GM12878 (cell line): ENCODE measurements at regions of chr3 and their contacts with region 1.

Region 1: DNA sequence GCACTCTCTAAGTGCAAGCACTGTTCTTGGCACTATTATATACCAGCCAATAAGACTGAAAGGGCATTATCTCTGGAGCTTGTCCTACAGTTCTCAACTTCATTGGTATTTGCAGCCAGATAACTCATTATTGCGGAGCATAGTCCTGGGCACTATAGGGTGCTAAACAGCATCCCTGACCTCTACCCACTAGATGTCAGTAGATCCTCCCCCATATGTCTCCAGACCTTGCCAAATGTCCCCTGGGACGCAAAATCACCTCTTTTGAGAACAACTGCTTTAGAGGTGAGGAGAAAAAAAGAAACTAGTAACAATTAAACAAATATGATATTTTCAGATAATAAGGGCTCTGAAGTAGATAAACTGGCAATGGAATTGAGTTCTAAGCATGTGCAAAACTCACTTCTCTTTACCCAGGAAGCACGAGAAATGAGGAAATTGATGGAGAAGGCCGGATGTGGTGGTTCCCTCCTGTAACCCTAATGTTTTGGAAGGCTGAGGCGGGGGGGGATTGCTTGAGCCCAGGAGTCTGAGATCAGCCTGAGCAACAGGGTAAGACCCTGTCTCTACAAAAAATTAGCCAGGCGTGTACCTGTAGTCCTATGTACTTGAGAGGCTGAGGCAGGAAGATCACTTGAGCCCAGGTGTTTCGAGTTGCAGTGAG is 61.4 kb downstream of the FRMD4B start:
- DNase-seq: no peak
- ATAC-seq: peak; percentile 70
- H3K4me3 ChIP-seq: no peak overlapping the region
- H3K27ac ChIP-seq: no peak overlapping the region
- H3K4me1 ChIP-seq: peaks cover 28% of the 10 kb centered on the region
- H3K27me3 ChIP-seq: no peaks in the 10 kb centered on the region
- CTCF ChIP-seq: peak; percentile 71 to 81 (median 77)
- EP300 ChIP-seq: 0 out of 4 replicates have a peak, but pooled peaks of 1 of the 2 experiments have one; percentile 15
- POLR2A ChIP-seq: no peak
- RAD21 ChIP-seq: peak; percentile 98

Region 2: DNA sequence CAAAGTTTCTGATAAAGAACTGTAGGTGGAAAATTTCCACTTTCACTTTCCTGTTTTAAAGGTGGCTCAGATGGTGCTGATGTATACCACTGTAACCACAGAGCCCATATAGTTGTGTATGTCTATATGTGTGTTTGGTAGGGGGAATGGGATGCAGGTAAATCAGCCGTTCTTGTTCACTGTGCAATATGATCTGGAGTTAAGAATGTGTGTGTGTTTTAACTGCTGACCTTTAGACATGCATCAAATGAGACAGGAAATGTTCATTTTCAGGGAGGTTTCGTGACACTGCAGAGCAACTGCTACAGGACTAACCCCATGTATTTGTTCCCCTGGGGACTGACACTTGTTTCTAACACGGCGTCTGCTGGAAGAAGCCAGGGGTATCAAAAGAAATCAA is 572.6 kb before region 1 on chr3:
- CTCF ChIA-PET with region 1: no interaction called
- POLR2A ChIA-PET with region 1: no interaction called
- RAD21 ChIA-PET with region 1: no interaction called
- SMC1A ChIA-PET with region 1: no interaction called
- in situ Hi-C with region 1: no loop called
- intact Hi-C with region 1: no loop called
- DNase-seq: no peak
- ATAC-seq: peak; percentile 27; the same call in 1 of the 3 replicates
- H3K4me3 ChIP-seq: no peak overlapping the region
- H3K27ac ChIP-seq: no peak overlapping the region
- H3K4me1 ChIP-seq: no peaks in the 10 kb centered on the region
- H3K27me3 ChIP-seq: no peaks in the 10 kb centered on the region
- CTCF ChIP-seq: no peak
- EP300 ChIP-seq: no peak
- POLR2A ChIP-seq: no peak
- RAD21 ChIP-seq: no peak

Region 3: GRCh38 chr3:69368129-69368741 is 43.7 kb after region 1 on chr3:
- CTCF ChIA-PET with region 1: interaction called, 10 read pairs
- POLR2A ChIA-PET with region 1: interaction called, 8 read pairs
- RAD21 ChIA-PET with region 1: interaction called, 9 read pairs
- SMC1A ChIA-PET with region 1: interaction called, 20 read pairs
- in situ Hi-C with region 1: no loop called
- intact Hi-C with region 1: loop called (anchors 1 kb)
- DNase-seq: peak; percentile 91
- ATAC-seq: peak; percentile 98
- H3K4me3 ChIP-seq: no peak overlapping the region
- H3K27ac ChIP-seq: no peak overlapping the region
- H3K4me1 ChIP-seq: peaks cover 23% of the 10 kb centered on the region
- H3K27me3 ChIP-seq: no peaks in the 10 kb centered on the region
- CTCF ChIP-seq: no peak
- EP300 ChIP-seq: peak; percentile 79 to 84; a peak in 2 of 4 replicates
- POLR2A ChIP-seq: no peak
- RAD21 ChIP-seq: no peak

Region 4: DNA sequence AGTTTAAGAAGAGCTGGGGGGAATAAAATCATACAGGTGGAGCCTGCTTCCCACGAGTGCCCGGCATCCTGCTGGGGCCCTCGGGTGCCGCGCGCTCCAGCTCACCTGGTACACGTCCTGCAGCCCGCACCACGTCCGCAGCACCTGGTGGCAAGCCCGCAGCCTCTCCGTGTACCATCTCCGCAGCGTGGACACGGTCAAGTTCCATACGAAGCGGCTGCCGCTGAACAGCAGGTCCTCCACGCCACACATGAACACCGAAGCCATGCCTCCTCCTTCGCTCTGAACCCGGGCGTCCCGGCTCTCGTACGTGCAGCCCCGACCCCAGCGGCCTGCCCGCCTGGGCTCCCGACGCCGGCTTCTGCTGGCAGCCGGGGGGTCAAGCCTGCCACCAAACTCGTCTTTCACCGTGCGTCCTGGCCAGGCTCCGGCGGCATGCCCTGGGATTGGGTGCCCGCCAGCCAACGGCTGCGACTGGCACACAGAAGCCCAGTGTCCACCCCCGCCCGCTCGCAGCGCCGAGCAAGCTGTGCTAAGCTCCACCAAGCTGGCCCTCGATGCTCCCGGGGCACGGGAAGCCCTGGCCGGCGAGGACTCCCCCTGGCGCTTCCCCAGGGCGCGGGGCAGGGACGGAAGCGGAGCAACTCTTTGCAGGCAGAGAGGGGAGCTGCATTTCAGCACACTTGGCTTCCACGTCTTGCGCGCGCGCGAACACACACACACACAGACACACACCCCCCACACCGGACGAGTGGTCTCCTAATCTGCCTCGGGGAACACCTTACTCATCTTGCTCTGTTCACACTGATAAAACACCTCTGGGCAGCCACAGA is 61.4 kb after region 1 on chr3 and contains the start of gene FRMD4B:
- CTCF ChIA-PET with region 1: interaction called, 10 read pairs
- POLR2A ChIA-PET with region 1: no interaction called
- RAD21 ChIA-PET with region 1: interaction called, 5 read pairs
- SMC1A ChIA-PET with region 1: interaction called, 6 read pairs
- in situ Hi-C with region 1: no loop called
- intact Hi-C with region 1: loop called (anchors 2 kb)
- DNase-seq: no peak
- ATAC-seq: peak; percentile 81
- H3K4me3 ChIP-seq: no peak within 1 kb of the TSS; the same call in 1 of the 2 replicates
- H3K27ac ChIP-seq: no peak within 1 kb of the TSS
- H3K4me1 ChIP-seq: no peaks in the 10 kb centered on the region
- H3K27me3 ChIP-seq: peaks cover 9 to 10% of the 10 kb centered on the region in 2 experiments
- CTCF ChIP-seq: peak in 2 of 3 experiments; percentile 17 to 26; a peak in 2 of 6 replicates
- EP300 ChIP-seq: no peak
- POLR2A ChIP-seq: no peak
- RAD21 ChIP-seq: peak; percentile 22; the same call in 1 of the 2 replicates
- polyA plus RNA-seq, gene FRMD4B: 7.0 to 11.4 TPM

Region 5: DNA sequence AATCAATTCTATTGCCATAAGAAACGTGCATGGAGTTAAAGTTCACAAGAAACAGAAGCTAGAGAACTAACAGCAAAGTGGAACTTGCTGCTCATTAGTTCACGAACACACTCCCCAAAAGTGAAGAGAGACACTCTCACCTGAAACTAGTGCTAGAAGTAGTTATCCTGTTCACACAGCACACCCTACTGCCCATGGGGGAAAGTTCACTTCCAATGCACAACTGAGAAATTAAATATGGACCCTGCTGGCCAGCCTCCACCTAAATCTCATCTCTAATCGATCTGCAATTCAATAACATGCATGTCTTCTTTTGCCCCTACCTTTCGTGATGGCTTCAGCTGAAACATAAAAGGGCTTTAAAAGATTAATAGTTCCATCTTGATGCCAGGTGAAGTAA is 100.8 kb after region 1 on chr3:
- CTCF ChIA-PET with region 1: interaction called, 158 read pairs
- POLR2A ChIA-PET with region 1: interaction called, 8 read pairs
- RAD21 ChIA-PET with region 1: interaction called, 20 read pairs
- SMC1A ChIA-PET with region 1: interaction called, 78 read pairs
- in situ Hi-C with region 1: loop called (anchors 5 kb)
- intact Hi-C with region 1: loop called (anchors 1 kb)
- DNase-seq: no peak
- ATAC-seq: peak; percentile 92
- H3K4me3 ChIP-seq: no peak overlapping the region
- H3K27ac ChIP-seq: no peak overlapping the region
- H3K4me1 ChIP-seq: no peaks in the 10 kb centered on the region
- H3K27me3 ChIP-seq: no peaks in the 10 kb centered on the region
- CTCF ChIP-seq: peak; percentile 67 to 72 (median 68)
- EP300 ChIP-seq: no peak
- POLR2A ChIP-seq: no peak
- RAD21 ChIP-seq: peak; percentile 78

Region 6: GRCh38 chr3:69439643-69440270 is 115.3 kb after region 1 on chr3:
- CTCF ChIA-PET with region 1: interaction called, 54 read pairs
- POLR2A ChIA-PET with region 1: interaction called, 6 read pairs
- RAD21 ChIA-PET with region 1: interaction called, 12 read pairs
- SMC1A ChIA-PET with region 1: interaction called, 50 read pairs
- in situ Hi-C with region 1: no loop called
- intact Hi-C with region 1: no loop called
- DNase-seq: peak; percentile 16
- ATAC-seq: peak; percentile 31
- H3K4me3 ChIP-seq: no peak overlapping the region
- H3K27ac ChIP-seq: no peak overlapping the region
- H3K4me1 ChIP-seq: 0 out of 2 replicates have a peak, but pooled peaks cover 2% of the 10 kb centered on the region
- H3K27me3 ChIP-seq: no peaks in the 10 kb centered on the region
- CTCF ChIP-seq: peak; percentile 50 to 64 (median 54)
- EP300 ChIP-seq: no peak
- POLR2A ChIP-seq: no peak
- RAD21 ChIP-seq: peak; percentile 53

Region 7: DNA sequence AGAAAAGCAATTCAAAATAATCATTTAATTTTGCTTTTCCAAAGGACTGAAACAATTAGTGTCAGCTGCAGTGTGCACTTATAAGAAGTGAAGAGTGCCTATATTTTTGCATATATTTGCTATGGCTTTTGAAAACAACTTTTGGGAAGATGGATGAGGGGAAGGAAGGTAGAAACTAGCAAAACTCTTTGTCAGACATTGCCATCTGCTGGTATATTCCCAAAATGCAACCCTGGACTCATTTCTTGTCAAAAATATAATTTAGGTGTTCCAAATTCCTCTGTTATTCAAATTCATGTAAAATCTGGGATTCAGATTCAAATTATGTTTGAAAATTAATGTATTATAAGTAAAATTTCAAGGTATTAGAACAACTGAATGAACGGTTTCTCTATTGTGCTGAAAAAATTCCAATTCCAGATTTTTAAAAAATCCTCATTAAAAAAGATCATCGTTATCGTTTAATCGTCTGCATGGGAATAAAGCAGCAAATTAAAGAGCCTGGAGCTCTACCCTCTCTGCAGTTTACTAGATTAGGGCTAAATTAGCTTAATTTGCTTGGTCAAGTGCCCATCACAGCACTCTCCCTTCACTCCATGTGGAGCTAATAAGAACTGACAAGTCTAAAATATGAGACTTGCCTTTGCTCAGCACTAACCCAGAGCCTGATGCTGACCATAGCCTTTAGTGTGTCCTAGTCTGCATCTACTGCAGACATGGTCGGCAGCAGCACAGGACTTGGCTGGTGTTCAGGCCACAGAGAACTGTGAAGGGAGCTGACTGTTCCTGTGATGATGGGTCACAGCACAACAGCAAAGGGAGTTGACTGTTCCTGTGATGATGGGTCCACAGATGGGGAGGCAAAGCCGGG is 346.8 kb after region 1 on chr3:
- CTCF ChIA-PET with region 1: interaction called, 14 read pairs
- POLR2A ChIA-PET with region 1: no interaction called
- RAD21 ChIA-PET with region 1: interaction called, 5 read pairs
- SMC1A ChIA-PET with region 1: interaction called, 3 read pairs
- in situ Hi-C with region 1: loop called (anchors 5 kb)
- intact Hi-C with region 1: loop called (anchors 2 kb)
- DNase-seq: no peak
- ATAC-seq: peak; percentile 51; the same call in 1 of the 3 replicates
- H3K4me3 ChIP-seq: no peak overlapping the region
- H3K27ac ChIP-seq: no peak overlapping the region
- H3K4me1 ChIP-seq: no peaks in the 10 kb centered on the region
- H3K27me3 ChIP-seq: no peaks in the 10 kb centered on the region
- CTCF ChIP-seq: peak; percentile 50 to 63 (median 53); a peak in 5 of 6 replicates
- EP300 ChIP-seq: no peak
- POLR2A ChIP-seq: no peak
- RAD21 ChIP-seq: peak; percentile 69

Region 8: DNA sequence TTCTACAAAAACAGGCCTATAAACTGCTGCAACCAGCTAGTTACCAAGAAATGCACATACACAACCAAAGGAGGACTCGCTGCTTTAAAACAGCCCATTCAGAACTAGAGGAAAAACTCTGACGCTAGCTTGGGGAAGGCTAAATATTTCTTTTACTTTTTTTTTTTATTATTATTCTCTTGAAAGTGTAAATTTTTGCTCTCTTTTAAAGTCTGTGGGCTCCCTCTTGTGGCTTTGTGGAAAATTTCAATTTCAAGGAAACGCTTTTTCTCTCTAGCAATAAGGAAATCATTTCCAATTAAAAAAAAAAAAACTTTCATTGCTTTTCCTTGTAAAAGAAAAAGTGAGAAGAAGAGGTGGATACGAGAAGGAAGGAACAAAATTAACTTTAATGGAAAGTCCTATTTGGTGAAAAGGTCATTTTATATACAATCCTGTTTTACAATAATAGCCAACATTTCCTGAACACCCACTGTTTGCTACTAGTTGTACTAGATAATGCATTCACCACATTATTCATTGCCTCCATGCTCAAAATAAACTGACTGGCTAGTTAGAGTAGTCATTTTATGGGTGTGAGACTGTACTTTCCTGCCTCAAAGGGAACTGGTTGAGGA is 623.9 kb after region 1 on chr3:
- CTCF ChIA-PET with region 1: no interaction called
- POLR2A ChIA-PET with region 1: no interaction called
- RAD21 ChIA-PET with region 1: no interaction called
- SMC1A ChIA-PET with region 1: no interaction called
- in situ Hi-C with region 1: no loop called
- intact Hi-C with region 1: loop called (anchors 10 kb)
- DNase-seq: no peak
- ATAC-seq: no peak
- H3K4me3 ChIP-seq: no peak overlapping the region
- H3K27ac ChIP-seq: no peak overlapping the region
- H3K4me1 ChIP-seq: no peaks in the 10 kb centered on the region
- H3K27me3 ChIP-seq: no peaks in the 10 kb centered on the region; a peak in 1 of 4 replicates
- CTCF ChIP-seq: peak; percentile 33 to 41 (median 41); a peak in 5 of 6 replicates
- EP300 ChIP-seq: no peak
- POLR2A ChIP-seq: no peak
- RAD21 ChIP-seq: peak; percentile 55

Region 9: DNA sequence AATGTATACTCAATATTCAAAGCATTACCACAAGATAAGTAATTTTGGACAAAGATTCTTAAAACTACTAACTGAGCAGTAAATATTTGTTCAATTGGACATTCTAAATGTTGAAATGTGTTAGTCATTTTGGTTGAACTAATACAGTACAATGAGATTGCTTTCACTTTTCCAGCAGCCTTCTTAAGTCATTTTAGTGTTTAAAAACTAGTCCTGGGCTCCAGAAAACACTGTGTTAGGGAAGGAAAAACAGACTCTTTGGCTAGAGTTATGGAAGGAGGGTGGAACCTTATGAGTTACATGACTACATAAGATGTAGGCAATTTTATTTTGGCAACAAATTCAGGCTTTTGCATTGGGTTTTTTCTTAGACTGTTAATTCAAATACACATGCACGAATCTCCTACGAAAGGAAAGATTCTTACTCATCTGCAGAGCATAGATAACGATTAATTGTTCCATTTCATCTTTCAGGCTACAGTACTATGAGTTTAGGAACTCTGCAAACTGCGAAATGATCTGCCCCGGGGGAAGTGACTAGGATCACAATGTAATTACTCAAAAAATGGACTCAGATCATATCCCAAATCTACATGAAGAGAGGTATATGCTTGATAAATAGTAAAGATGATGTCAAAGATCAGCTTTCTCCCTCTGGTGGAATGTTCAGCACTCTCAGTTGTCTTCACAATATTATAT is 1480.7 kb after region 1 on chr3:
- CTCF ChIA-PET with region 1: no interaction called
- POLR2A ChIA-PET with region 1: no interaction called
- RAD21 ChIA-PET with region 1: no interaction called
- SMC1A ChIA-PET with region 1: no interaction called
- in situ Hi-C with region 1: no loop called
- intact Hi-C with region 1: no loop called
- DNase-seq: no peak
- ATAC-seq: no peak
- H3K4me3 ChIP-seq: no peak overlapping the region
- H3K27ac ChIP-seq: no peak overlapping the region
- H3K4me1 ChIP-seq: no peaks in the 10 kb centered on the region
- H3K27me3 ChIP-seq: no peaks in the 10 kb centered on the region
- CTCF ChIP-seq: no peak
- EP300 ChIP-seq: no peak
- POLR2A ChIP-seq: no peak
- RAD21 ChIP-seq: no peak